ENCODE measurements at regions of chr12 and their contacts with region 1.

Region 1: DNA sequence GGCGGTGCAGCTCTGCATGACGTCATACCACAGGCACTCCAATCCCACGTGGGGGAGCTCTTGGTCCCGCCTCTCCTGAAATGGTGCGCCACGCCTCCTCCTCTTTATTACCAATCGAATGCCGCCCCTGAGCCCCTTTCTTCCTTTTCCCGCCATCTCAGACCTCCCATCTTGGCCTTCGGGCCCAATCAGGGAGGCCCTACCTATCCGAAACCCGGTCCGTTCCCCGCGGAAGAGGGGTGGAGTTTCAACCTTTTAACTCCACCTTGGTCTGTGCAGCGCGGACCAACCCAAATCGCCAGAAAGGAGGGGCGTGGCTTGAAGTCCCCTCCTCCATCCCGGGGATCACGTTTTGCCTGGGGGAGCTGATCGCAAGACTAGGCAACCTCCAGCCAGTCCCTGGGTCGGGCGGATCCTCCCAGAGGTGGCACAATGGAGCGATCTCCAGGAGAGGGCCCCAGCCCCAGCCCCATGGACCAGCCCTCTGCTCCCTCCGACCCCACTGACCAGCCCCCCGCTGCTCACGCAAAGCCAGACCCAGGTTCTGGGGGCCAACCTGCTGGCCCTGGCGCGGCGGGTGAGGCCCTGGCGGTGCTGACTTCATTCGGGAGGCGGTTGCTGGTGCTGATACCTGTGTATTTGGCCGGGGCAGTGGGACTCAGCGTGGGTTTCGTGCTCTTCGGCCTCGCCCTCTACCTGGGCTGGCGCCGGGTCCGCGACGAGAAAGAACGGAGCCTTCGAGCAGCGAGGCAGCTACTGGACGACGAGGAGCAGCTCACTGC is at the start of gene ESYT1:
- DNase-seq: peak; percentile 99
- H3K4me3 ChIP-seq: peak within 1 kb of the TSS; percentile 59 to 76
- H3K27ac ChIP-seq: peak within 1 kb of the TSS; percentile 82 to 94
- H3K4me1 ChIP-seq: peaks cover 11% of the 10 kb centered on the region
- H3K27me3 ChIP-seq: no peaks in the 10 kb centered on the region
- CTCF ChIP-seq: peak in 1 of 4 experiments; percentile 19
- POLR2A ChIP-seq: peak; percentile 99
- total RNA-seq, gene ESYT1: 66.8 to 167 TPM

Region 2: GRCh38 chr12:56158029-56158925 is 30.2 kb after region 1 on chr12 and contains the start of gene MYL6:
- intact Hi-C with region 1: loop called (anchors 2 kb)
- DNase-seq: peak; percentile 99
- H3K4me3 ChIP-seq: peak within 1 kb of the TSS; percentile 58 to 71
- H3K27ac ChIP-seq: peak within 1 kb of the TSS; percentile 97 to 98
- H3K4me1 ChIP-seq: peaks cover 12% of the 10 kb centered on the region
- H3K27me3 ChIP-seq: no peaks in the 10 kb centered on the region
- CTCF ChIP-seq: peak in 1 of 4 experiments; percentile 18
- POLR2A ChIP-seq: peak; percentile 100
- total RNA-seq, gene MYL6: 1,587 to 1,792 TPM

Region 3: GRCh38 chr12:56468216-56469006 is 340.3 kb after region 1 on chr12 and contains the start of gene SPRYD4:
- intact Hi-C with region 1: loop called (anchors 5 kb)
- DNase-seq: peak; percentile 92
- H3K4me3 ChIP-seq: peak within 1 kb of the TSS; percentile 67 to 81
- H3K27ac ChIP-seq: peak within 1 kb of the TSS; percentile 81 to 85
- H3K4me1 ChIP-seq: peaks cover 3% of the 10 kb centered on the region
- H3K27me3 ChIP-seq: no peaks in the 10 kb centered on the region
- CTCF ChIP-seq: peak in 3 of 4 experiments; percentile 61 to 70 (median 62)
- POLR2A ChIP-seq: peak; percentile 79
- total RNA-seq, gene SPRYD4: 2.6 to 5.1 TPM